ENCODE measurements at regions of chr11 and their contacts with region 1.

Region 1: DNA sequence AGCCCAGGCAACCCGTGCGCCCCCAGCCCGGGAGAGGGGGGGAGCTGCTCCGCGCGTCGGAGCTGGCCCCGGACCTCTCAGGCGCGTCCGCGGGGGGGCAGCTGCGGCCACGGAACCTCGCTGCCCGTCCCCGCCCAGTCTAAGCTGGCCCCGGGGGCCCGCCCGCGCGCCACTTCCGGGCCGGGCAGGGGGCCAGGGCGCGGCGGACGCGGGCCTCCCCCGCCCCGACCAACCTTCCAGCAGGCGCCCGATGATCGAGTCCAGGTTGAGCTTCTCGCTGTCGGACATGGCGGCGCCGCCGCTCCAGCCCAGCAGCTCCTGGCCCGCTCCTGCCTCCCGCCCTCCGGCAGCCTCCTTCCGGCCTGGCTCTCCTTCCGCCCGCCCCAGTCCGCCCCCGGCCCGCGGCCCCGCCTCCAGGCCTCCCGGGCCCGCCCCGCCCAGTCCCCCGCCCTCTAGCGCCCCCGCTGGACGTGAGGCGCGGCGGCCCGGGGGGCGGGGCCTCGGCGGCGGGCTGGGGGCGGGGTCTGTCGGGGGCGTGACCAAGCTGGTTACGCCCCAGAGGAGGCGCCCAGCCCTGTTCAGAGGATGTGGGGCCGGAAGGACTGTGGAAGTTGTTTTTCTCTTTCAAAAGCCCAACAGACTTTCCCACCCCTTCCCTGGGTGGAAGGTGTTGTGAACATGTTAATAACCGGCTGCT is at the start of gene PPP1CA:
- DNase-seq: peak; percentile 93
- ATAC-seq: peak; percentile 72
- H3K4me3 ChIP-seq: peak within 1 kb of the TSS; percentile 65 to 92 (median 85)
- H3K4me3 Mint-ChIP-seq: peak within 1 kb of the TSS; percentile 87
- H3K27ac ChIP-seq: peak within 1 kb of the TSS; percentile 70 to 83
- H3K27ac Mint-ChIP-seq: peak within 1 kb of the TSS; percentile 95
- H3K4me1 ChIP-seq: peaks cover 57 to 79% of the 10 kb centered on the region in 2 donors
- H3K4me1 Mint-ChIP-seq: peaks cover 67% of the 10 kb centered on the region
- H3K27me3 ChIP-seq: no peaks in the 10 kb centered on the region
- H3K27me3 Mint-ChIP-seq: no peaks in the 10 kb centered on the region
- CTCF ChIP-seq: peak; percentile 70
- total RNA-seq, gene PPP1CA: 248 and 251 TPM in 2 replicates

Region 2: GRCh38 chr11:67353317-67354074 is 48.1 kb before region 1 on chr11 and contains the start of gene POLD4:
- CTCF ChIA-PET with region 1: interaction called, 19 read pairs
- POLR2A ChIA-PET with region 1: interaction called, 26 read pairs
- intact Hi-C with region 1: no loop called
- DNase-seq: peak; percentile 98
- ATAC-seq: peak; percentile 81
- H3K4me3 ChIP-seq: peak within 1 kb of the TSS; percentile 60 to 99 (median 83)
- H3K4me3 Mint-ChIP-seq: peak within 1 kb of the TSS; percentile 96
- H3K27ac ChIP-seq: peak within 1 kb of the TSS; percentile 94 to 96
- H3K27ac Mint-ChIP-seq: peak within 1 kb of the TSS; percentile 100
- H3K4me1 ChIP-seq: peaks cover 80 to 90% of the 10 kb centered on the region in 2 donors
- H3K4me1 Mint-ChIP-seq: peaks cover 87% of the 10 kb centered on the region
- H3K27me3 ChIP-seq: no peaks in the 10 kb centered on the region
- H3K27me3 Mint-ChIP-seq: no peaks in the 10 kb centered on the region
- CTCF ChIP-seq: no peak
- total RNA-seq, gene POLD4: 190 and 210 TPM in 2 replicates

Region 3: GRCh38 chr11:67391304-67392132 is 10.1 kb before region 1 on chr11 and contains the start of gene RAD9A:
- CTCF ChIA-PET with region 1: interaction called, 30 read pairs
- POLR2A ChIA-PET with region 1: interaction called, 40 read pairs
- intact Hi-C with region 1: loop called (anchors 1 kb)
- DNase-seq: peak; percentile 96
- ATAC-seq: peak; percentile 83
- H3K4me3 ChIP-seq: peak within 1 kb of the TSS; percentile 63 to 95 (median 81)
- H3K4me3 Mint-ChIP-seq: peak within 1 kb of the TSS; percentile 91
- H3K27ac ChIP-seq: peak within 1 kb of the TSS; percentile 33 to 78
- H3K27ac Mint-ChIP-seq: peak within 1 kb of the TSS; percentile 69
- H3K4me1 ChIP-seq: peaks cover 10 to 29% of the 10 kb centered on the region in 2 donors
- H3K4me1 Mint-ChIP-seq: peaks cover 36% of the 10 kb centered on the region
- H3K27me3 ChIP-seq: no peaks in the 10 kb centered on the region
- H3K27me3 Mint-ChIP-seq: no peaks in the 10 kb centered on the region
- CTCF ChIP-seq: no peak
- total RNA-seq, gene RAD9A: 48.3 and 50.6 TPM in 2 replicates

Region 4: GRCh38 chr11:67439321-67439883 is 37.8 kb after region 1 on chr11:
- CTCF ChIA-PET with region 1: interaction called, 63 read pairs
- POLR2A ChIA-PET with region 1: interaction called, 195 read pairs
- intact Hi-C with region 1: loop called (anchors 1 kb)
- DNase-seq: peak; percentile 50
- ATAC-seq: no peak
- H3K4me3 ChIP-seq: peak overlapping the region in 2 of 5 experiments; percentile 92 to 96
- H3K4me3 Mint-ChIP-seq: peak overlapping the region; percentile 88
- H3K27ac ChIP-seq: peak overlapping the region; percentile 22 to 88
- H3K27ac Mint-ChIP-seq: peak overlapping the region; percentile 92
- H3K4me1 ChIP-seq: peaks cover 68 to 85% of the 10 kb centered on the region in 2 donors
- H3K4me1 Mint-ChIP-seq: peaks cover 82% of the 10 kb centered on the region
- H3K27me3 ChIP-seq: no peaks in the 10 kb centered on the region
- H3K27me3 Mint-ChIP-seq: no peaks in the 10 kb centered on the region
- CTCF ChIP-seq: no peak

Region 5: DNA sequence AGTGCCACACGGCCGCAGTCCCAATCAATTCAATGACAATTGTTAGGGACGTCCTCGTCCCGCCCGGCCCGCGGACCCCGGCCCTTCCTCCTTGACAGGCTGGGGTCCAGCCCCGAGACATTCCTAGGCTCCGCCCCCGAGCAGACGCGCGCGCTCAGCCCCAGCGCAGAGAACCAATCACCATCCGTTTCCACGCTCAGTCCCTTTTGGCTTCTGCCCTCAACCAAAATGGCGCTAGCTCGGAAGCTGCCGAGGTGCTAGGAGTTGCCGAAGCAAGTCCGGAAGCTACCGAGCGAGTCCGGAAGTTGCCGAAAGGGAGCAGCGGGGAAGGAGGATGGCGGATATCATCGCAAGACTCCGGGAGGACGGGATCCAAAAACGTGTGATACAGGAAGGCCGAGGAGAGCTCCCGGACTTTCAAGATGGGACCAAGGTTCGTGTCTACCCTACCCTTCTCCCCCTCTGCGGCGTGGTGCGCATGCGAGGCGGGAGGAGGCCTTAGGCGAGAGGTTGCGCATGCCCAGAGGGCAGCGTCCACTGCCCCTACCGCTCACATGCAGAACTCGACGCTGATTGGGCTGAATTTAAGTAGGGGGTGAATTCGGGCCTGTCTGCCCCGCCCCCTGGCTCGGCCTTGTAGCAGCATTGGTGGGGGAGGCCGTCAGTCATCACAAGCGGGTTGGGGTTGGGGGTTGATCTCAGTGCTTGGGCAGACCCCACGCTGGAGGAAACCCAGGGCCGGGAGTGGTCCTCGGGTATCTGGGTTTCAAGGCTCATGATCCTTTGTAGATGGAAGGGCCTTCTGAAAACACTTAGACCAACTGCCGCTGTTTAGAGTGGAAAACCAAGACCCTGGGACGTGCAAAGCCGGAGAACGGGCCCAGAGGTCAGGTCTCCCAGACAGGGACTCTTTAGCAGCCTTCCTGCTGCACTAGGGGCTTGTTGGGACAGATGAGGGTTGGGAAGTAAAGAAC is 81.5 kb after region 1 on chr11 and contains the start of gene AIP:
- CTCF ChIA-PET with region 1: interaction called, 16 read pairs
- POLR2A ChIA-PET with region 1: interaction called, 15 read pairs
- intact Hi-C with region 1: loop called (anchors 1 kb)
- DNase-seq: peak; percentile 98
- ATAC-seq: peak; percentile 87
- H3K4me3 ChIP-seq: peak within 1 kb of the TSS; percentile 56 to 99 (median 68)
- H3K4me3 Mint-ChIP-seq: peak within 1 kb of the TSS; percentile 99
- H3K27ac ChIP-seq: peak within 1 kb of the TSS; percentile 75 to 79
- H3K27ac Mint-ChIP-seq: peak within 1 kb of the TSS; percentile 100
- H3K4me1 ChIP-seq: peaks cover 38 to 56% of the 10 kb centered on the region in 2 donors
- H3K4me1 Mint-ChIP-seq: peaks cover 56% of the 10 kb centered on the region
- H3K27me3 ChIP-seq: no peaks in the 10 kb centered on the region
- H3K27me3 Mint-ChIP-seq: no peaks in the 10 kb centered on the region
- CTCF ChIP-seq: no peak
- total RNA-seq, gene AIP: 120 and 127 TPM in 2 replicates

Region 6: DNA sequence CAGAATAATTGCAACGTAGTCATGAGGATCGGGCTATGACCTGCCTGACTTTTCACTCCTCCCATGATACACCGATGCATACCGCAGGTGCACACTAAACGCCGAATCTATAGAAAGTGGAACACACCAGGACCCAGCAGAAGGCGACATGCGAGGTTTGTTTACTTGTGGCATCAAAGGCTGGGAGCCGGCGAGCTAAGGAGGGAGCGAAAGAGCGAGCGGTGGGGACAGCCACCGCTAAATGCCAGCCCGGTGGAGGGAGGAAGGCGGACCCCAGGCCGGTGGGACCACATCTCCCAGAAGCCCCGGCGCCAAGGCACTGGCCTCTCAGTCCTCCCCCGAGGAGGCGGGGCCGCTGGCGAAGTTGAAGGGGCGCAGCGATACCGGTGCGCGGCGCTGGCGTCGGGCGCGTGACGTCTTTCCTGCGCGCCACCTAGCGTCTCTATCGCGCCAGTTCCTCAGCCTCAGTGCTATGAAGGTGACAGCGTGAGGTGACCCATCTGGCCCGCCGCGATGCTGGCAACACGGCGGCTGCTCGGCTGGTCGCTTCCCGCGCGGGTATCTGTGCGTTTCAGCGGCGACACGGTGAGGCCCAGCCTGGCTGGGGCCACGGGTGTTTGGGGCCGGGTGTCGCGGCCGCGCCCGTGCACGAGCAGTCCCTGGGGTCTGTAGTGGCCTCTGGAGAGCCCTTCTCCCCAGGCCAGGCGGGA is 205.0 kb after region 1 on chr11 and contains the start of gene NDUFV1:
- CTCF ChIA-PET with region 1: no interaction called
- POLR2A ChIA-PET with region 1: no interaction called
- intact Hi-C with region 1: loop called (anchors 1 kb)
- DNase-seq: peak; percentile 97
- ATAC-seq: peak; percentile 99
- H3K4me3 ChIP-seq: peak within 1 kb of the TSS; percentile 70 to 90 (median 88)
- H3K4me3 Mint-ChIP-seq: peak within 1 kb of the TSS; percentile 95
- H3K27ac ChIP-seq: peak within 1 kb of the TSS; percentile 43 to 72
- H3K27ac Mint-ChIP-seq: peak within 1 kb of the TSS; percentile 90
- H3K4me1 ChIP-seq: peaks cover 13 to 17% of the 10 kb centered on the region in 2 donors
- H3K4me1 Mint-ChIP-seq: peaks cover 20% of the 10 kb centered on the region
- H3K27me3 ChIP-seq: peaks cover 0 to 16% (median 5%) of the 10 kb centered on the region in 4 experiments
- H3K27me3 Mint-ChIP-seq: peaks cover 18% of the 10 kb centered on the region
- CTCF ChIP-seq: peak; percentile 82
- total RNA-seq, gene NDUFV1: 232 and 238 TPM in 2 replicates